ENCODE measurements at regions of chr5 and their contacts with region 1.

Region 1: DNA sequence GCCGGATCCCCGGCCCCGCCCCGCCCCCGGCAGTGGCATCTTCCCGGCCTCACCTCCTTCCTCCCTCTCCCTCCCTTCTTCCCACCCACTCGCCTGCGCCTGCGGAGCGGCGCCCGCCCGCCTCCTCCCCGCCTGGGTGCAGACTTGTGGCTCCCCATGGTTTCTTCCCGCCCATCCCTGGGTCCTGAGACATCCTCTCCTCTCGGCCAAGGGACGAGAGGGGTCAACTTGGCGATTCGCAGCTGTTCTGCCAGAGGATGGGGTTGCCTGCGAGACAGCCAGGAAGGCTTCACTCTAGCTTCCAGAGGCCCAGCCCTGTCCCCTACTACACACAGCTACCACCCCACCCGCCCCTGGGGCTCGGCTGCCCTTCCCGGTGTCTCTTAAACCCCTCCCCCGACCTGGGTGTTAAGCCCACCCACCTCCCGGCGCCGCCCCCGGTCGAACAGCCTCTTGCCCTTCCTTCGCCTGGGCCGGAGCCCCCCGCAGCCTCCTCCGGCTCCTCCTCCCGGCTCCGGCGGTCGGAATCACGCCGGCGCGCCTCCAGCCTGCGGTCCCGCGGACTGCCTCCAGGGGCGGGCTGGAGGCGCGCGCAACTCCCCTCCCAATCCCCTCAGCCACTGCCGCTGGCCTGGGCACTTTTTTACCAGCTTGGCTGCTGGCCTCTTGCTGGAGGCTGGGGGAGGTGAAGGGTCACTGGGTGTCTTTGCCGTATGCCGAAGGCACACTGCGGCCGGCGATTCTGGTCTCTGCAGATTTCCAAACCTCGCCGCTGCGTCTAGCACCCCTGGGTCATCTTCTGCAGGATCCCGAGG is 1.9 kb downstream of the JADE2 start:
- DNase-seq: peak; percentile 93
- H3K4me3 ChIP-seq: peak overlapping the region; percentile 90 to 92
- H3K27ac ChIP-seq: peak overlapping the region; percentile 91 to 98
- H3K4me1 ChIP-seq: peaks cover 10 to 42% of the 10 kb centered on the region in 2 experiments; a peak in 3 of 4 replicates
- H3K27me3 ChIP-seq: no peaks in the 10 kb centered on the region
- CTCF ChIP-seq: peak; percentile 70
- EP300 ChIP-seq: no peak
- RAD21 ChIP-seq: peak; percentile 63

Region 2: DNA sequence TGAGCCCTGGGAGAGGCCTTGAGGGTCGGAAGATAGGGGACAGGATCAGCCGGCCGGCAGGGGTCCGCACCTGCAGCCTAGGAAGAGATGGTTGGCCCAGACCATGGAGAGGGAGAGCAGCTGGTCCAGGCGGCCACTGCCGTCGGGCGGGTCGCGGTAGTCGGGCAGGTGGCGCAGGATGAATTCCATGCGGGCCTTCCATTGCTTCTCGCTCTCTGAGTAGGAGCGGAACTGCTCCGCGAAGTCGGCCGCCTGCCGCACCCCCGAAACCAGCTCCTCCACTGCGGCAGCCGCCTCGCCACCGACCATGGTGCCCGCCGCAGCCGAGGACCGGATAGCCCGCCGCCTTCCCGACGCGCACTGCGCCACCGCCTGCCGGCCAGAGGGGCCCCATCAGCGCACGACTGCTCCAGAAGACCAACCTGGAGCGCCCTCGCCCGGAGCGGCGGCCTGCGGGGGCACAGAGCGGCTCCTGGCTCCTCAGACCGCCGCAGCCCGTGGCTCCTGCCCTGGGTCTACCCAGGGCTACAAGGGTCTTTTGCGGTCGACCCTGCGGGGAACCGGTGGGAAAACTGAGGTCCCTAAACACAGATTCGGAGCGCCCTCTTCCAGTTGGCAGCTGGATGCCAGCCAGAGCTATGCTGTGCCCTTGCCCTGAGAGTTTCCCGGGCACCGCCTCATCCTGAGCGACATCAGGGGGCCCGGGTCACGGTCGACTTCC is 115.6 kb before region 1 on chr5 and contains the start of gene CDKN2AIPNL:
- CTCF ChIA-PET with region 1: interaction called, 36 read pairs
- POLR2A ChIA-PET with region 1: interaction called, 7 read pairs
- DNase-seq: peak; percentile 97
- H3K4me3 ChIP-seq: peak within 1 kb of the TSS; percentile 65 to 99
- H3K27ac ChIP-seq: peak within 1 kb of the TSS; percentile 25 to 63; a peak in 3 of 4 replicates
- H3K4me1 ChIP-seq: peaks cover 0 to 14% of the 10 kb centered on the region in 2 experiments; a peak in 2 of 4 replicates
- H3K27me3 ChIP-seq: no peaks in the 10 kb centered on the region
- CTCF ChIP-seq: peak; percentile 70
- EP300 ChIP-seq: peak in 1 of 2 experiments; percentile 65; a peak in 1 of 4 replicates
- RAD21 ChIP-seq: peak; percentile 66
- polyA plus RNA-seq, gene CDKN2AIPNL: 23.3 and 29.4 TPM in 2 replicates

Region 3: DNA sequence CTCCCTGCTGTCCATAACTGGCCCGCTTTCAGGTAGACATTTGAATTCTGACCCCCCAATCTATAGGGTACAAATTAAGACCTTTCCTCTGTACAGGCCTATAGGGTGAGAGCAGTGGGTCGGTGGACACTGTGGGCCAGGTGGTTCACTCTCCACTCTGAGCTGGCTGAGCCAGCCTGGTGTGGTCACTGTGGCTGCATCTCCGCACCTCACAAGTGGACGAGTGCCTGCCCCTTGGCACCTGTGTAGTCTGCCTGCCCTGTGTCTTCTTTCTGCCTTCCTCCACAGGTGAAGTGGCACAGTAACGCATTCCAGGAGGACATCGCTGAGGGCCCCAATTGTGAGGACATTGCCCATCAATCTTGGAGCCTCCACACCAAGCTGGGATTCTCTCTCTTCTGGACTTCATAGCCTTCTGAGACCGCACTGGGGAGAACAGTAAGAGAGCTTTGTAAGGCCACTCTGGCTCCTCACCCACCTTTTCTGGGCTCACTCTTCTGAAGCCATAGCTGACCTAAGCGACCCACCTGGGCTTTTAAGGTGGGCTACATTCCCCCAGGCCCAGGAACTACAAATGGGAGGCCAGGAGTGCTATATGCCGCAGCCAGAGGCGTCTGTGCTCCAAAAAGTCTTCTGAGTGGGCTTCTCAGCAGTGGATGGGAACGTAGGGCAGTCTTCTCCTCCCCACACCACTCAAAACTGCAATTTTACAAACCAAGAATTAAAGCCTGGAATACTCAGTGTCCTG is 35.3 kb before region 1 on chr5:
- CTCF ChIA-PET with region 1: interaction called, 11 read pairs
- POLR2A ChIA-PET with region 1: no interaction called
- DNase-seq: no peak
- H3K4me3 ChIP-seq: no peak overlapping the region
- H3K27ac ChIP-seq: peak overlapping the region in 1 of 2 experiments; percentile 30; a peak in 1 of 4 replicates
- H3K4me1 ChIP-seq: peaks cover 0 to 18% of the 10 kb centered on the region in 2 experiments; a peak in 1 of 4 replicates
- H3K27me3 ChIP-seq: no peaks in the 10 kb centered on the region
- CTCF ChIP-seq: no peak
- EP300 ChIP-seq: no peak
- RAD21 ChIP-seq: no peak

Region 4: DNA sequence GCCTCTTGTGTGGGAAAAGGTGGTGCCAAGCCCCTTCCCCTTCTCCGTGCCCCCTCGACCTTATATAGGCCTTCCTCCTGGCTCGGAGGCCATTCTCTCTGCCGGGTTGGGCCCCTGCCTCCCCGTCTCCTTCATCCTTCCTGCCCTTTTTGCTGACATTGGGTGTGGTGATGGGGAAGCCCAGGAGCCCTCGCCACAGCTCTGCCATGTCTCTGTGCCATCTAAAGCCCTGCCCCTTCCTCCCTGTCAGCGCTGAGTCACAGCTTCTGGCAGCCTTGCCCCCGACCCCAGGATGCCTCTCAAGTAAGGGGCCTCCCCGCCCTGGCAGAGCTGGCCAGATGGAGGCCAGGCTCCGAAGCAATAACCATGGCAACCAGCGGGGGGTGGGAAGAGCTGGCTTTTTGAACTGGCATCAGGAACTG is 28.5 kb after region 1 on chr5:
- CTCF ChIA-PET with region 1: interaction called, 28 read pairs
- POLR2A ChIA-PET with region 1: interaction called, 24 read pairs
- DNase-seq: peak; percentile 90
- H3K4me3 ChIP-seq: no peak overlapping the region
- H3K27ac ChIP-seq: peak overlapping the region; percentile 89 to 98
- H3K4me1 ChIP-seq: peaks cover 51 to 60% of the 10 kb centered on the region in 2 experiments
- H3K27me3 ChIP-seq: no peaks in the 10 kb centered on the region
- CTCF ChIP-seq: peak; percentile 17; the same call in 1 of the 2 replicates
- EP300 ChIP-seq: peak in 1 of 2 experiments; percentile 54; a peak in 2 of 4 replicates
- RAD21 ChIP-seq: no peak; the same call in 1 of the 2 replicates

Region 5: GRCh38 chr5:134568761-134569695 is 41.7 kb after region 1 on chr5:
- CTCF ChIA-PET with region 1: interaction called, 24 read pairs
- POLR2A ChIA-PET with region 1: no interaction called
- DNase-seq: peak; percentile 87
- H3K4me3 ChIP-seq: no peak overlapping the region; a peak in 1 of 4 replicates
- H3K27ac ChIP-seq: peak overlapping the region; percentile 54 to 91
- H3K4me1 ChIP-seq: peaks cover 17 to 31% of the 10 kb centered on the region in 2 experiments; a peak in 3 of 4 replicates
- H3K27me3 ChIP-seq: no peaks in the 10 kb centered on the region
- CTCF ChIP-seq: no peak
- EP300 ChIP-seq: 0 out of 4 replicates have a peak, but pooled peaks of 1 of the 2 experiments have one; percentile 31
- RAD21 ChIP-seq: no peak

Region 6: GRCh38 chr5:134586866-134587524 is 59.6 kb after region 1 on chr5:
- CTCF ChIA-PET with region 1: interaction called, 43 read pairs
- POLR2A ChIA-PET with region 1: interaction called, 6 read pairs
- DNase-seq: peak; percentile 89
- H3K4me3 ChIP-seq: no peak overlapping the region; a peak in 1 of 4 replicates
- H3K27ac ChIP-seq: peak overlapping the region in 1 of 2 experiments; percentile 24; a peak in 1 of 4 replicates
- H3K4me1 ChIP-seq: peaks cover 0 to 5% of the 10 kb centered on the region in 2 experiments; a peak in 1 of 4 replicates
- H3K27me3 ChIP-seq: no peaks in the 10 kb centered on the region
- CTCF ChIP-seq: peak; percentile 88
- EP300 ChIP-seq: no peak
- RAD21 ChIP-seq: peak; percentile 88

Measured in SK-N-SH (cell line).